ENCODE measurements at regions of chr12 and their contacts with region 1.

Region 1: GRCh38 chr12:52454411-52455216 is 2.7 kb upstream of the KRT6B start:
- DNase-seq: peak; percentile 82
- H3K4me3 ChIP-seq: no peak overlapping the region
- H3K27ac ChIP-seq: peak overlapping the region; percentile 85
- H3K4me1 ChIP-seq: peaks cover 36% of the 10 kb centered on the region
- H3K27me3 ChIP-seq: no peaks in the 10 kb centered on the region
- CTCF ChIP-seq: no peak

Region 2: DNA sequence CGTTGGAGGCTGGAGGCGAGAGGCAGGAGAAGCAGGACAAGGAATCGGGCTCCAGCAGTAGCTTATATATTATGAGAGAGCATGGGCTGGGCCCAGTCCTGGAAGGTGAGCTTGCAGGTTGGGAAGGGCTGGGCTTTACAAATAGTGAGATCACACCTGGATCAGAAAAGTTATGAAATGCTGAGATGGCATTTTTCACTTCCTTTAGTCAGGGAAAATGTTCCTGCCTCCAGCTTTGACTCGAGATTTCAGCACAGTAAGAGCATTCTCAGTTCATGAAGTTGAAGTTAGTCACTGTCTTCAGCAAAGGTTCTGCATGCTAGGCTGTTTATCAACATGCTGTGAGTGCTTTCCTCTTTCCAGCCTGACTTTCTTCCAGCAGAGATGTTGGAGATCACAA is 19.2 kb after region 1 on chr12 and contains the start of gene KRT6C:
- CTCF ChIA-PET with region 1: no interaction called
- dilution Hi-C with region 1: no loop called
- in situ Hi-C with region 1: no loop called
- intact Hi-C with region 1: loop called (anchors 2 kb)
- DNase-seq: peak; percentile 79
- H3K4me3 ChIP-seq: no peak within 1 kb of the TSS
- H3K27ac ChIP-seq: no peak within 1 kb of the TSS
- H3K4me1 ChIP-seq: peaks cover 6% of the 10 kb centered on the region
- H3K27me3 ChIP-seq: no peaks in the 10 kb centered on the region
- CTCF ChIP-seq: no peak
- total RNA-seq, gene KRT6C: 16.6 to 29.5 TPM

Region 3: DNA sequence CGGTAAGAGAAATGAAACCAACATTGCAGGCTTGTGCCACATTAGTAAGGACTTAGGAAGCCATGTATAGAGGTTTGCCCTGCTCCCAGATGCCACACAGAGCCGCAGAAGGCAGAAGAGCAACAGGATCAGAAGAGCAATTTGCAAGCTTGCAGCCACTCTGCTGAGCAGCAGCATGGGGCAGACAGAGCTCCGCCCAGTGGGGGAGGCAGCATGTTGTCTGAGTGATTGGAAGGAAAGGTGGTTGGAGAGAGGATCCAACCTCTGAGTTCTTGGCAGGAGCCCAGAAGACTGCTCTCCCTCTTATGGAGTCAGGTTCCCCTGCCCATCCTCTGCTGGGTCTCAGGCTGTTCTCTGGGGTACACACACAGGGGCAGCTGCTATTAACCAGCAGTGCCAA is 40.8 kb after region 1 on chr12:
- CTCF ChIA-PET with region 1: no interaction called
- dilution Hi-C with region 1: no loop called
- in situ Hi-C with region 1: no loop called
- intact Hi-C with region 1: loop called (anchors 1 kb)
- DNase-seq: peak; percentile 72
- H3K4me3 ChIP-seq: no peak overlapping the region
- H3K27ac ChIP-seq: peak overlapping the region; percentile 99
- H3K4me1 ChIP-seq: peaks cover 69% of the 10 kb centered on the region
- H3K27me3 ChIP-seq: no peaks in the 10 kb centered on the region
- CTCF ChIP-seq: peak in 1 of 2 donors; percentile 31